ENCODE measurements at regions of chr6 and their contacts with region 1.

Region 1: GRCh38 chr6:105087571-105088211 is 92.1 kb downstream of the POPDC3 start:
- DNase-seq: peak; percentile 53
- ATAC-seq: no peak
- H3K4me3 Mint-ChIP-seq: no peak overlapping the region
- H3K27ac Mint-ChIP-seq: no peak overlapping the region
- H3K4me1 Mint-ChIP-seq: no peaks in the 10 kb centered on the region
- H3K27me3 Mint-ChIP-seq: peaks cover 11% of the 10 kb centered on the region

Region 2: DNA sequence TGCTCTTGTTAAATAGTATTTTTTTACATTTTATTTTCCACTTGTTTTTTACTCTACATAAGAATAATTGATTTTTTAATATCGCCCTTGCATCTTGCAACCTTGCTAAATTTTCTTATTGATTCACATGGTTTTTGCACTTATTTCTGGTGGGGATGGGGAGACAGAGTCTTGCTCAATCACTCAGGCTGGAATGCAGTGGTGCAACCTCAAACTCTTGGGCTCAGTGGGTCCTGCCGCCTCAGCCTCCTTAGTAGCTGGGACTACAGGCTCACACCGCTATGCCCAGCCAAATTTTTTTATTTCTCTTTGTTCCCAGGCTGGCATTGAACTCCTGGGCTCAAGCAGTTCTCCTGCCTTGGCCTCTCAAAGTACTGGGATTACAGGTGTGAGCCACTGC is 100.5 kb before region 1 on chr6:
- CTCF ChIA-PET with region 1: no interaction called
- POLR2A ChIA-PET with region 1: no interaction called
- DNase-seq: no peak
- ATAC-seq: no peak
- H3K4me3 Mint-ChIP-seq: no peak overlapping the region
- H3K27ac Mint-ChIP-seq: no peak overlapping the region
- H3K4me1 Mint-ChIP-seq: no peaks in the 10 kb centered on the region
- H3K27me3 Mint-ChIP-seq: no peaks in the 10 kb centered on the region

Region 3: GRCh38 chr6:105199711-105200110 is 112.0 kb after region 1 on chr6:
- CTCF ChIA-PET with region 1: no interaction called
- POLR2A ChIA-PET with region 1: no interaction called
- DNase-seq: no peak
- ATAC-seq: no peak
- H3K4me3 Mint-ChIP-seq: no peak overlapping the region
- H3K27ac Mint-ChIP-seq: no peak overlapping the region
- H3K4me1 Mint-ChIP-seq: no peaks in the 10 kb centered on the region
- H3K27me3 Mint-ChIP-seq: peaks cover 12% of the 10 kb centered on the region

Region 4: DNA sequence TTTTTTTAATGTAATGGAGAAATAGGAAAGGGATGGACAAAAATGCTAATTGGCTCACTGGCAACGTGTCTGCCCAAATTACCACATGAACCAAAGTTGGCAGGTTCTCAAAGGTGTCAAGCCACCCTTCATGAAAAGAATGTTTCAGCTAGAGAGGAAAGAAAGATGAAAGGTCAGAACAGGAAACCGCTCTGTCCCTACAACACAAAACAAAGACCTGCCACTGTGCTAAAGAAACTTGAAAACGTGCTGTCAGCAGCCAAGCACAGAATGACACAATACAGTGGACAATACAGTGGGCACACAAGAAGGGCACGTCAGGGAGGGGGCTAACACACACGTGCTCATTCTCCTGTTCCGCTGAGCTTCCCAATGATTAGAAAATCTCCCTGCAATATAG is 310.3 kb after region 1 on chr6:
- CTCF ChIA-PET with region 1: interaction called, 20 read pairs
- POLR2A ChIA-PET with region 1: no interaction called
- DNase-seq: peak; percentile 22
- ATAC-seq: no peak
- H3K4me3 Mint-ChIP-seq: no peak overlapping the region
- H3K27ac Mint-ChIP-seq: peak overlapping the region; percentile 17
- H3K4me1 Mint-ChIP-seq: peaks cover 50% of the 10 kb centered on the region
- H3K27me3 Mint-ChIP-seq: no peaks in the 10 kb centered on the region

Region 5: GRCh38 chr6:105402939-105403935 is 315.5 kb after region 1 on chr6 and contains the start of gene PREP:
- CTCF ChIA-PET with region 1: interaction called, 20 read pairs
- POLR2A ChIA-PET with region 1: no interaction called
- DNase-seq: peak; percentile 86
- ATAC-seq: peak; percentile 95
- H3K4me3 Mint-ChIP-seq: peak within 1 kb of the TSS; percentile 91
- H3K27ac Mint-ChIP-seq: peak within 1 kb of the TSS; percentile 82
- H3K4me1 Mint-ChIP-seq: peaks cover 47% of the 10 kb centered on the region
- H3K27me3 Mint-ChIP-seq: peaks cover 7% of the 10 kb centered on the region
- total RNA-seq, gene PREP: 42.8 to 44.1 TPM

Region 6: DNA sequence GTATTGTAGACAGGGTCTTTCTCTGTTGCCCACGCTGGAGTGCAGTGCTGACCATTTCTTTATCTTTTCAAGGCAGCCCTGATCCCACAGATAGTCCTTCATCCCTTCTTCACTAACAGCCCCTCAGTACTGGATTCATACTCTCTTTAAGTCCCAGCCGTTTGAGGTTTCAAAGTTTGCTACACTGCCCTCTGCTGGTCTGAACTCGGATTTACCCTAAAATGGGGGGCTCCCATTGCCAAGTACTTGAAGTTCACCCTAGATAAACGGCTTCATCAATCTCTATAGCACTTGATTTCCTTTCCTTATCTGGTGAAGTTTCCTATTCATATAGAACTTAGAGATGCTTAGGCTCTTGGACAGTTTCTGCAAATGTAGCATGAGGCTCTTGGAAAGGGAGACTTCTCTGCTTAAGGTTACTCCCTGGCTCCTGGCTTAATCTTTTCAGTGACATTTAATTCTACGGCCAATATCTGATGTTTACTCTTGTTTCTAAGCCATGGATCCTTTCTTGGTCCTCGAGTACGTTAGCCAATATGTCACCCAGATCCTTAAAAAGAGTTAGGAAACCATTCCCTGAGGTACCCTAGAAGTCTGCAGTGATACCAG is 336.6 kb after region 1 on chr6:
- CTCF ChIA-PET with region 1: interaction called, 23 read pairs
- POLR2A ChIA-PET with region 1: no interaction called
- DNase-seq: peak; percentile 77
- ATAC-seq: peak; percentile 75
- H3K4me3 Mint-ChIP-seq: no peak overlapping the region
- H3K27ac Mint-ChIP-seq: no peak overlapping the region
- H3K4me1 Mint-ChIP-seq: no peaks in the 10 kb centered on the region
- H3K27me3 Mint-ChIP-seq: peaks cover 15% of the 10 kb centered on the region

Measured in activated CD8-positive, alpha-beta T cell treated with anti-CD3 and anti-CD28 coated beads, Interleukin-2, amount 10 ng/mL, durations not matched to agents 7 days and 5 days (primary cell).